AG04449 (cell line): ENCODE measurements at regions of chr10 and their contacts with region 1.

Region 1: DNA sequence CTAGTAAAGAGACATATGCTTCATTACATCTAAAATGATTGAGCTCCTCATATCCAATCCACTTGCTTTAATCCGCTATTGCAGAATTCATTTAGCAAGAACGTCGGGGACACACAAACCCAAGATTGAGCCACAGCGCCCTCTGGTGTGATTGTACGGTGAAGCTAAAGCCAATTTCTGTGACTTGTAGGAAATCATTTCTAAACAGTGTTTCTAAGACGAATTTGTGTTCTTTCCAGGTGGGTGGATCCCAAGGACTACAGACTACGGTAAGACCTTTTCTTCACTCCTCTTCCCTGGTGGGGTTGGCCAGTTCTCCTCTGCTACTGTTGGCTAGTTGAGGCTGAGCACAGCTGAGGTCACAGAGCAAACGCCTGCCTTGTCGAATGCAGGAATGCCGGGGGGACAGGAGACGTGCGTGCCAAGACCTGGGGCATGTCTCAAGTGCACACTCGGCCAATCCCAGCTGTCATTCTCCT is 5.2 kb downstream of the DMBT1 start:
- DNase-seq: peak; percentile 41
- H3K4me3 ChIP-seq: peak overlapping the region; percentile 10; the same call in 1 of the 2 replicates
- CTCF ChIP-seq: peak; percentile 80

Region 2: DNA sequence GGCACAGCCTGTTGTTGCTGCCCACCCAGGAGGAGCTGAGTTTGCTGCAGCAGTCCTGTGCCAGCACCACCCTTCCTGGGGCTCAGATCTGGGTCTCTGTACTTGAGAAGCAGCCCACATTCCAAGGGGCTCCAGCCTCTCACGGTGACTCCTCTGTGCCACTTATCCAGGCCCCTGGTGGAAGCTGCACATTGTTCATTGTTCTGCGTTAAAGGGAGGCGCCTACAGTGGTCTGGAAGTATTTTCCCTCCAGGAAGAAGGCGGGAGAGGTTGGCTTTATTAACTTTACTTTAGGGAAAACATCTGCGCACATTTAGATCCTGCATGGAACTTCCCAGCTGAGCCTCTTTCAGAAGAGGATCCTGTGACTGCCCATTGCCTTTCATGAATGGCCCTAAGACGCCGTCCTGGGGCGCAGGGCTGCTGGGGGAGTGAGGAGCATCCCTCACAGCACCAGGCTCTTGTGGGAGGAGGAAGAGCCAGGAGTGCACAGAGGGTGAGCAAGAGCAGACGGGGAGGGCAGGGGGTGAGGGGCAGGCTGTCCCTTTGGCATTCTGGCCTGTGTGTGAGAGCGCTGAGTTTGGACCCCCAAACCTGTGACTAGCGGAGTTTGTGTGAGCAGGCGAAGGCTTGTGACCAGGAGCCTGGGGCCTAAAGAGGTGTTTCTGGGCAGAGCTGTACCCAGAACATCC is 393.3 kb before region 1 on chr10:
- CTCF ChIA-PET with region 1: no interaction called
- POLR2A ChIA-PET with region 1: no interaction called
- DNase-seq: no peak
- H3K4me3 ChIP-seq: no peak overlapping the region
- CTCF ChIP-seq: no peak

Region 3: GRCh38 chr10:122298598-122299301 is 267.0 kb before region 1 on chr10:
- CTCF ChIA-PET with region 1: interaction called, 146 read pairs
- POLR2A ChIA-PET with region 1: no interaction called
- DNase-seq: no peak
- H3K4me3 ChIP-seq: peak overlapping the region; percentile 43
- CTCF ChIP-seq: peak; percentile 89

Region 4: GRCh38 chr10:122374237-122374869 is 191.4 kb before region 1 on chr10 and contains the start of gene PLEKHA1:
- CTCF ChIA-PET with region 1: interaction called, 11 read pairs
- POLR2A ChIA-PET with region 1: no interaction called
- DNase-seq: peak; percentile 47
- H3K4me3 ChIP-seq: peak within 1 kb of the TSS; percentile 78
- CTCF ChIP-seq: no peak

Region 5: DNA sequence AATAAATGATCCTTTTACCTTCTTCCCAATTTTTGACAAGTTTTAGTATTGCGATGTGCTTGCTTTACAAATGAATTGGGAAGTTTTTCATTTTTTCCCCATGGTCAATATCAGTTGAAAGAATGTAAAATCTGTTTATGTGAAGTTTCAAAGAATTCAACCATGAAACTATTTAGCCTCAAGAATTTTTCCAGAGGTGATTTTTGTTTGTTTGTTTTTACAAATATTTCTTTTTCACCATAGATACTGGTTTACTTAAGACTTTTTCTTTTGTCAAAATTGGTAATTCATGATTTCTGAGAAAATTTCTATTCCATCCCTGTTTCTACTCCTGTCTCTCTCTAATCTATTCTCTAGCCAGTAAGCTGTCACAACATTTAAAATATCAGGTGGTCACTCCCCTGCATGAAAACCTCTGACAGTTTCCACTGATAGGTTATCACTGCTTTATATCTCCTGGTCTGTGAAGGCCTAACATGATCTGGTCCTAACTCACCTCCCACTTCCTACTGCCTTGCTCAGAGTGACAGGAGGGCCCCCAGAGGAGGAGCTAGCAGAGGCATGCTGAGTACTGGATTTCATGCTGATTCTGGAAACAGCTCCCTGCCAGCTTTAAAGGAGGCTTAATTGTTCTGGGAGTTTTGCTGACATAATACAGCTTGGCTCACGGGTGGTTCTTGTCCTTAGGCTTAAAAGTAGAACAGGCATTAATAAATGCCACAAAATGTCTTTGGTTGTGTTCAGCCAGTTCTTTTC is 118.9 kb before region 1 on chr10:
- CTCF ChIA-PET with region 1: interaction called, 52 read pairs
- POLR2A ChIA-PET with region 1: no interaction called
- DNase-seq: no peak
- H3K4me3 ChIP-seq: no peak overlapping the region
- CTCF ChIP-seq: no peak

Region 6: DNA sequence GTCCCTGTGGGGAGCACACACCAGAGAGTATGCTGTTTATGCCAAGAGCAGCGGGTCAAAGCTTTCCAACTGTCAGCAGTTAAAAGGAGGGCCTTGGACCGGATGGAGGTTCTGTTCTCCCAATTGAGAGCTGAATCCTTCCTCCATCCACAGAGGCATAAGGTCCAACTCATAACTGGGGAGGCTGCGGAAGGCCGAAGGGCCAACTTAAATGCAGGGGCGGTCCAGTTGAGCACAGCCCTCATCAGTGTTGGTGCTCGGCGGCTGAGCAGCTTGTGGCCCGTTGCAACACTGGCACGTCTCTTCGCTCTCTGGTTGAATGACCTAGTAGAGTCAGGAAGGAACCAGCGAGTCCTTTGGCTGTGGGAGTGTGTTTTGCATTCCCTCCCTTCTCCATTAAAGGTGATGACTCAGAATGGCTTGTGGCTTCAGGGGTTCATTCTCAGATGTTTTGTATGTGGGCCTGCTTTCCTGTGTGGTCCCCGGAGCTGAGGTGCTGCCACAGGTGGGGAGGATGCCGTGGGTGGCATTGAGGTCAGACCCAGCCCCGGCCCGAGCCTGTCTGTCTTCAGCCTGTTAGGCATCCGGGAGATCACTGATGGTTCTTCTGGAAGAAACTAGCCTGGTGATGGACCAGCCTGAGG is 50.1 kb before region 1 on chr10:
- CTCF ChIA-PET with region 1: interaction called, 15 read pairs
- POLR2A ChIA-PET with region 1: no interaction called
- DNase-seq: no peak
- H3K4me3 ChIP-seq: no peak overlapping the region
- CTCF ChIP-seq: no peak

Region 7: DNA sequence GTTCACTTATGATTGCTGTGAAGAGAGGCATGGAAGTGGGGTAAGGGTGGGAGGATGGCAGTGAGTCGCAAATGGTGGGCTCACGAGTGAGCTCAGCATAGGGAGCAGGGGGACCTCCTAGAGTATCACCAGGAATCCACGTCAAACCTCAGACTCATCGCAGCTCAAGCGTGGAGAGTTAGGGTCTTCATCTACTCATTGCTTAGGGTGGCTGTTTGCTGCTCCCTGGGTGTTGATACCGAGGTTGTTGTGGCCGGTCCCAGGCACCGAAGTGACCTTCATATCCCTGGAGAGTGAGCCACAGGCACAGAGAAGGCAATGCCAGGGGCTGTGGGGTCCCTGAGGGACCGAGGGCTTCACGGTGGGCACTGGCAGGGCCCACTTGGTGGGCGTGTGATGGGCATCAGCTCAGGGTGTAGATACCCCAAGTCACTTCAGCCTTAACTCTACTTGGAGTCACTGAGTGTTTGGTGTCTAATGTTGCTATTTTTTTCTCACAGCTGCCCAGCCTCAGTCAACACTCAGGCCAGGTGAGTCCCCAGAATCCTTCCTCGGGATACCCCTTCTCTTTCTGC is 11.6 kb after region 1 on chr10:
- CTCF ChIA-PET with region 1: interaction called, 33 read pairs
- POLR2A ChIA-PET with region 1: no interaction called
- DNase-seq: no peak
- H3K4me3 ChIP-seq: no peak overlapping the region
- CTCF ChIP-seq: no peak

Region 8: DNA sequence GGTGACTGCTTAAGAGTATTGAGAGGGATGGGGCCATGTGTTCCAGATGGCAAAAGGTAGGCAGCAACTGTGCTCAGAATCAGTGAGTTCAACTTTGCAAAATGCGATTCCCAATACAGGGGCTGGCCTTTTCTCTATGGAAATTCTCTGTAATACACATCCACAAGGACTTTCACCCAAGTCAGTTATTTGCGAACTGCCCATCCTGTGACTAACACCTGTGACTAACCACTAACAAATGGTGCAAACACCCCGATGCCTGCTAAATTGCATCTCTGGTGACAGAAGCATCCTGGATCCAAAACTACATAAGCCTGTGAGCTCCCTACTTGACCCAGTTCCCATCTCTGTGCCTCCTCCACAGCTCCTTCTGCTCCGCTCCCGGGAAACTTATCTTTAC is 288.9 kb after region 1 on chr10:
- CTCF ChIA-PET with region 1: no interaction called
- POLR2A ChIA-PET with region 1: no interaction called
- DNase-seq: peak; percentile 55
- H3K4me3 ChIP-seq: no peak overlapping the region
- CTCF ChIP-seq: no peak

Region 9: DNA sequence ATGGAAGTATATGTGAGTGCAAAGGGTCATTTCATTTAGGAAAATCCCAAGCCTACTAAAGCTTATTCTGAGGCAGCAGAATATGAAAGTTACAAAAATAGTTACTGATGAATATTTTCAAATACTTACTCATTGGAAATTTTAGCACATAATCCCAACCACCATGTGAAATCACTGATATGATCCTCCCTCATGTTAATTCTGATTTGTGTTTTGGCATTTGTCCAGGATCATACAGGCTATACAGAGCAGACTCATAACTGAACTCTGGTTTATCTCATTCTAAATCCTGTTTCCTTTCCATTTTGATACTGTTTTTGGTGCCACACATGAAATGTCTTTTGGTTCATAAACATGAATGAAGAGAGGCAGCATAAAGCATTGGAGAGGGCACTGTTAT is 317.0 kb after region 1 on chr10:
- CTCF ChIA-PET with region 1: no interaction called
- POLR2A ChIA-PET with region 1: no interaction called
- DNase-seq: no peak
- H3K4me3 ChIP-seq: no peak overlapping the region
- CTCF ChIP-seq: no peak